Mammary epithelial cell (primary cell): ENCODE measurements at regions of chr14 and their contacts with region 1.

Region 1: DNA sequence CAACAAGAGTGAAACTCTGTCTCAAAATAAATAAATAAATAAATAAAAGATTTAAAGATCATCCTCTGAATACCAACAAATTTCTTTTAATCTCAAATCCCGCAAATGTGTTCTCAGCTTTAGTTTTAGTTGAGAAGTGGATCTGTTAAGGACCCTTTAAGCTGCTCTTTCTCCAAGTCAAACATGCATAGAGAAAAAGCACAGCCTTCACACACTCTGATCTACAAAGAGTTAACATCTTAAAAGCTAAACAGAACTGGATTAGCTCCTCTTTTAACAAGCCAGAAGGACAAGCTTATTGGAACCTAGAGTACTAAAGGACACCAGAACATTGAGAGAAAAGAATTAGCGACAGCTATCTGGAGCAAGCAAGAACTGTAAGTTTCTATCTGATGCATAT is at the start of gene RPGRIP1:
- DNase-seq: no peak
- H3K4me3 ChIP-seq: no peak within 1 kb of the TSS
- H3K27ac ChIP-seq: no peak within 1 kb of the TSS
- H3K4me1 ChIP-seq: no peaks in the 10 kb centered on the region
- H3K27me3 ChIP-seq: no peaks in the 10 kb centered on the region
- CTCF ChIP-seq: no peak
- total RNA-seq, gene RPGRIP1: under 0.01 TPM in 1 of 2 donors, not detected in the other

Region 2: DNA sequence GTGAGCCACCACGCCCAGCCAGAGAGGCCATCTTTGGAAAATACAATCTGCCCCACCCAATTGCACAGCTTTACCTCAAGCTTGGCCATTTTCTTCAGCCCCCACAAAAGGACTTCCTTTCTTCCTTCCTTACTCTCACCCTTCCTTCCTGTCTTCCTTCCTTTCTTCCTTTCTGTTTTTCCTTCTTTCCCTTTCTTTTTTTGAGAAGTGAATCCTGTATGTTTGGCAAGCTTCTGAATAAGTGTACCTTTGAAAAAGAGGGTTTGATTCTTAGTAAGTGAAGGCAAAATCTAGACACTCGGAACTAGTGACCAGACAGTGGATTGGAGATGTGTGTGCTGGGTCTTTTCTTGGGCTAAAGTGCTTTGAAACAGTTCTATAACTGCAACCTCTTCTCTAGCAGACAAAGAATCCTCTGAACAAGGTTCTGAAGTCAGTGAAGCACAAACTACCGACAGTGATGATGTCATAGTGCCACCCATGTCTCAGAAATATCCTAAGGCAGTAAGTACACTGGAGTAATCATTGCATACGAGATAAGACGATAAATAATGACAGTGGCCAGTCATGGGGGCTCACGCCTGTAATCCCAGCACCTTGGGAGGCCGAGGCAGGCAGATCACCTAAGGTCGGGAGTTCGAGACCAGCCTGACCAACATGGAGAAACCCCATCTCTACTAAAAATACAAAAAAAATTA is 54.6 kb after region 1 on chr14:
- CTCF ChIA-PET with region 1: no interaction called
- dilution Hi-C with region 1: loop called (anchors 5 kb)
- in situ Hi-C with region 1: no loop called
- intact Hi-C with region 1: no loop called
- DNase-seq: no peak
- H3K4me3 ChIP-seq: no peak overlapping the region
- H3K27ac ChIP-seq: no peak overlapping the region
- H3K4me1 ChIP-seq: no peaks in the 10 kb centered on the region
- H3K27me3 ChIP-seq: no peaks in the 10 kb centered on the region
- CTCF ChIP-seq: no peak